Ascending aorta (tissue), 2 donors: ENCODE measurements at regions of chr6 and their contacts with region 1.

Region 1: GRCh38 chr6:41505122-41506049 is 40.8 kb upstream of the FOXP4 start:
- DNase-seq: peak in 1 of 2 donors; percentile 90
- H3K4me3 ChIP-seq: peak overlapping the region; percentile 53 to 63
- H3K27ac ChIP-seq: peak overlapping the region; percentile 85 to 90
- H3K4me1 ChIP-seq: peaks cover 4 to 12% of the 10 kb centered on the region in 2 donors
- H3K27me3 ChIP-seq: no peaks in the 10 kb centered on the region
- CTCF ChIP-seq: no peak

Region 2: GRCh38 chr6:41545703-41546474 is 40.5 kb after region 1 on chr6 and contains the start of gene FOXP4:
- intact Hi-C with region 1: loop called (anchors 1 kb)
- DNase-seq: peak; percentile 49 to 93
- H3K4me3 ChIP-seq: peak within 1 kb of the TSS; percentile 75 to 95
- H3K27ac ChIP-seq: peak within 1 kb of the TSS; percentile 50 to 92
- H3K4me1 ChIP-seq: peaks cover 11 to 16% of the 10 kb centered on the region in 2 donors
- H3K27me3 ChIP-seq: no peaks in the 10 kb centered on the region
- CTCF ChIP-seq: no peak
- total RNA-seq, gene FOXP4: 19.5 TPM

Region 3: GRCh38 chr6:41638002-41638934 is 132.9 kb after region 1 on chr6 and contains the start of gene MDFI:
- intact Hi-C with region 1: no loop called
- DNase-seq: no peak
- H3K4me3 ChIP-seq: peak within 1 kb of the TSS; percentile 51 to 65
- H3K27ac ChIP-seq: no peak within 1 kb of the TSS
- H3K4me1 ChIP-seq: peaks cover 14 to 16% of the 10 kb centered on the region in 2 donors
- H3K27me3 ChIP-seq: peaks cover 19% of the 10 kb centered on the region
- CTCF ChIP-seq: no peak
- total RNA-seq, gene MDFI: 94.7 TPM

Region 4: DNA sequence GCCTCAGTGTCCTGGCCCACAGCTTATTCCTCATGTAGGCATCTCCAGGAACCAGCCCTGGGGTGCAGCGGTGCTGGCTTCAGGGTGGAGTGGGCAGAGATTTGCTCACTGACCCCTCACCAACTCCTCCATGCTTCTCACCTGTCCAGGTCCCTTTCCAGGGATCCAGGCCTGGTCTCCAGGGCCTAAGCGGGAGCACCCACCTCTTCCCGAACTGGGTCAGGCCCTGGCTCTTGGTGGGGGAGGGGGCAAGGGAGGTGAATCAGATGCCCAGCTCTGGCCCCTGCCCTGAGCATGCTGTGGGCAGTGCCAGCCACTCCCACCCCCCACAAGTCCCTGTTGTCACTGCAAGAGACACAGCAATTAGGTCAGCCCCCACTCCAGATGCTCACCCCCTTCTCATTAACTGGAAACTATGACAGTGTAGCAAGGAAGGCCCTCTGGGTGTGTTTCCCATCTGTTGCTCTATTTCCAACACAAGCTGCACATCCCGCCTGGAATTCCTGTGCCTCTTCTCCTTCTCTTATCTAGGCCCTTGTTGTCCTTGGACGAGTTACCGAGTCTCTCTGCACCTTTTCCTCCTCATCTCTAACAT is 169.9 kb after region 1 on chr6:
- intact Hi-C with region 1: no loop called
- DNase-seq: no peak
- H3K4me3 ChIP-seq: no peak overlapping the region
- H3K27ac ChIP-seq: no peak overlapping the region
- H3K4me1 ChIP-seq: no peaks in the 10 kb centered on the region
- H3K27me3 ChIP-seq: no peaks in the 10 kb centered on the region
- CTCF ChIP-seq: no peak